Thyroid gland (tissue), 4 donors: ENCODE measurements at regions of chr5 and their contacts with region 1.

Region 1: DNA sequence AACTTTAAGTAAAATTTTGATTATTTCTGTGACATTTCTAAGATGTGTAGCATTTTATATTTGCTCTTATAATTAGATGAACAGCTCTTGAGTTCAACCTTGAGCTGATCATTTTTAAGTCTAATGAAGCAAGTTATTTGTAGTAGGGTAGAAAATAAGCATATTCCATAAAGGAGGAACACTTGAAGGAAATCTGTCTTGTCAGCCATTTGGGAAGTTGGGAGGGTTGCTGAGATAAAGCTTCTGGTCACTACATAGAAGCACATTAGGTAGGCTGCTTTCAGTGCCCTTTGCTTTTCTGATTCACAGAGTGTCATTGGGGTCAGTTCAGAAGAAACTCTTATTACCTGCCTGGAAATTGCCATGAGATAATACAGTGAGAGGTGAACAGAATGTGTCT is 44.1 kb downstream of the SEC24A start:
- DNase-seq: no peak
- H3K4me3 ChIP-seq: no peak overlapping the region
- H3K27ac ChIP-seq: no peak overlapping the region
- H3K4me1 ChIP-seq: no peaks in the 10 kb centered on the region
- H3K27me3 ChIP-seq: no peaks in the 10 kb centered on the region
- CTCF ChIP-seq: no peak
- POLR2A ChIP-seq: no peak

Region 2: DNA sequence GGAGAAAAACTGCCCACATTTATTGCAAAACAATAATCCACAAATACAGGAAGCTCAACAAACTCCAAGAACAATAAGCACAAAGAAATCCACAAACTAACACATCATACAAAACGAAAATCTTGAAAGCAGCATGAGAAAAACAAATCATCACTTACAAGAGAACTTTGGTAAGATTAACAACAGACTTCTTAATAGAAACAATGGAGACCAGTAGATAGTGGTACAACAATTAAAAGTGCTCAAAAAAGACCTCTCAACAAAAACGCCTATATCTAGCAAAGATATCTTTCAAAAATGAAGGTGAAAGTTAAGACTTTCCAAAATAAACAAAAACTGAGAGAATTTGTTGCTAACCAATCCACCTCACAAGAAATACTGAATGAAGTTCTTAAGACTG is 364.1 kb before region 1 on chr5:
- intact Hi-C with region 1: no loop called
- DNase-seq: no peak
- H3K4me3 ChIP-seq: no peak overlapping the region
- H3K27ac ChIP-seq: no peak overlapping the region
- H3K4me1 ChIP-seq: no peaks in the 10 kb centered on the region
- H3K27me3 ChIP-seq: no peaks in the 10 kb centered on the region
- CTCF ChIP-seq: no peak
- POLR2A ChIP-seq: no peak

Region 3: DNA sequence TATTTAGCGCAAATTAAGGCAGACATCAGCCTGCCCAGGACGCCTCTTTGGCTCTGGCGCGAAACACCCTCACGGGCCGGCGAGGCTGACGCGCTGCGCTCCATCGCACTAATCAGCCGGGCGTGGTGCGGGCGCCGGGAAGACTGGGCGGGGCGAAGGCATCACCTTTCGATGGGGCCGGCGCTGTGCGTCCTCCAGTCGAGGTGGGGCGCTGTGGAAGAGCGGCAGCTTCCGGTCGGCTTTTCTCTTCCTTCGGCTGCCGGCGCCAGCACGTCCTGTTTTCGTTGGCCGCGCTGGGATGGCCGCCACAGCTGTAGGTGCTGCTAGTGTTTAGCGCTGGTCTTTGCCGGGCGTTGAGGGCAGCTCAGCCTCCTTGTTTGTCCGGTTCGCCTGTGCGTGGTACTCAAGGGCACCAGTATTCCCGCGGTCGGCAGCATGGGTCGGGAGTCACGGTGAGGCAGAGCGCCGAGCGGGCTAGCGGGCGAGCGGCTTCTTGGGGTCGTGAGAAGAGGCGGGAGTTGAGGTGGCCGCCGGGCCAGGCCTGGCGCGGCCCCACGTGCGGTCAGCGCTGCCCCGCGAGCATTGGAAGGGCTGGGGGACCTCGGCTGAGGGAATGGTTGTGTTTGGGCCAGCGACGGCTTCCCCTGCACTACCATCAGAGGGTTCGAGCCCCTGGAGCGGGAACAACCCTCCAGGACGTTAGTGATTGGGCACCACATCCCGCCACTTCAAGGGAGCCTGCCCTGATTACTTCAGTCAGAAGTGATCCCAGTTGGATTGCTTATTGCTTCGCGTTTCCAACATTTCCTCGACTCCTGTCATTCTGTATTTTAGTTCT is 66.0 kb after region 1 on chr5 and contains the start of gene DDX46:
- intact Hi-C with region 1: no loop called
- DNase-seq: peak; percentile 94 to 97
- H3K4me3 ChIP-seq: peak within 1 kb of the TSS; percentile 75 to 90 (median 76)
- H3K27ac ChIP-seq: peak within 1 kb of the TSS in 2 of 3 donors; percentile 53 to 57
- H3K4me1 ChIP-seq: peaks cover 12 to 14% of the 10 kb centered on the region in 2 donors
- H3K27me3 ChIP-seq: no peaks in the 10 kb centered on the region
- CTCF ChIP-seq: peak; percentile 24 to 95 (median 68)
- POLR2A ChIP-seq: peak in 1 of 2 donors; percentile 66
- total RNA-seq, gene DDX46: 37.3 to 97.0 (median 63.6) TPM

Region 4: GRCh38 chr5:134784241-134784920 is 91.7 kb after region 1 on chr5:
- intact Hi-C with region 1: loop called (anchors 10 kb)
- DNase-seq: no peak
- H3K4me3 ChIP-seq: no peak overlapping the region
- H3K27ac ChIP-seq: no peak overlapping the region
- H3K4me1 ChIP-seq: no peaks in the 10 kb centered on the region
- H3K27me3 ChIP-seq: no peaks in the 10 kb centered on the region
- CTCF ChIP-seq: no peak
- POLR2A ChIP-seq: no peak